ENCODE measurements at regions of chr20 and their contacts with region 1.

Region 1: DNA sequence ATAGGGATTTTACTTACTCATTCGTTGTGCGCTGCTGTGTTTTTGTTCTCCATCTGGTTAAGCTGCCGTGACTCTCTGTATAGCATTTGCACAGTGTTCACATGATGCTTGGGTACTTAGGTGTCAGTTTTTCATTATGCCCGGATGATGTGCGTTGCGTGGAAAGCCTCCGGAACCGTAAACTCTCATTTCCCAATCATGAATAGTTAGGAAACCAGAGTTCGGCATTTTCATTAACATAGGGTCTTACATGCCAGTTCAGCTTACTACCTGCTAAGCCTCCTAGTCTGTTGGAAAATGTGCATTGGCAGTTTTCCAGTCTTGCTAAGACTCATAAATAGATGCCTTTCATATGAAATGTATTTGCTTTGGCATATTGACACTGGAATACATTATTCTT is 483.4 kb upstream of the FLRT3 start:
- DNase-seq: no peak
- H3K4me3 ChIP-seq: no peak overlapping the region
- H3K27me3 ChIP-seq: no peaks in the 10 kb centered on the region
- CTCF ChIP-seq: no peak

Region 2: GRCh38 chr20:14717134-14717999 is 103.4 kb before region 1 on chr20:
- CTCF ChIA-PET with region 1: no interaction called
- POLR2A ChIA-PET with region 1: no interaction called
- DNase-seq: no peak
- H3K4me3 ChIP-seq: no peak overlapping the region
- H3K27me3 ChIP-seq: no peaks in the 10 kb centered on the region
- CTCF ChIP-seq: no peak

Region 3: GRCh38 chr20:15976047-15976731 is 1155.4 kb after region 1 on chr20:
- CTCF ChIA-PET with region 1: no interaction called
- POLR2A ChIA-PET with region 1: interaction called, 19 read pairs
- DNase-seq: no peak
- H3K4me3 ChIP-seq: no peak overlapping the region
- H3K27me3 ChIP-seq: no peaks in the 10 kb centered on the region
- CTCF ChIP-seq: no peak